Activated T-helper 1 cell treated with anti-CD3 and anti-CD28 coated beads, Interleukin-12 subunit alpha, Interleukin-12 subunit beta, Interleukin-2, Interleukin-4 antibody, amounts not matched to agents 30 ng/mL and 10 ng/mL and 1 ng/mL, durations not matched to agents 14 hours and 24 hours and 36 hours (primary cell): ENCODE measurements at regions of chr4 and their contacts with region 1.

Region 1: DNA sequence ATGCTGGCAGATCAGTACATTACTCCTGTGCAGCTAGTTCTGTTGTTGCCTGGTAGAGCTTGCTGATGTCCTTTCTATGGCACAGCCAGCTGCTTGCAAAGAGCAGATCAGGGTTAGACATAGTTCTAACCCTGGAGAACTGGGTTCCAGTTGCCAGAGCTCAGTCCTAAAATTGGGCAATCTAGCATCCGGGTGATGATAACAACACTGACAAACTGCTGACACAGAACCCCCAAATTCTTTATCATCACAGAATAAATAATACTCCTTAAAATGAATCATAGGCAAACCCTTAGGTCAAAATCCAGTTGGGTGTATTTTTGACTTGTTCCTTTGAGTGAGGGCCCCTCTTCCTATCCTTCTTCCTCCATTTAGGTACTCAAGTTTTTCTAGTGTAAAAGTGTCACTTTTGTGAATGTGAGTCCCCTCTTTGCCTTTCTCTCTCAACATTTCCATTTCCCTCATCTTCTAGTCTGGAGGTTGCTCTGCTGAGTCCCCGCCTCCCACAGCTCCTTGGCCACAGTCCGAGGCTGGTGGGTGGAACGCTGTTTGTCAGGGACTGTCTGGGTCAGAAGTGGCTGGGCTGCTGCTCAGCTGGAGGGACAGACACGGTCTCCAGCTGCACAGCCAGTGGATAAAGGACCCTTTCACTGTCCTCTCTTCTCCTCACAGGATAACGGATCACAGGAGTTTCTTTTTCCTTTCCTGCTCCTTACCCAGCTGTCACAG is 93.6 kb upstream of the RASGEF1B start:
- DNase-seq: no peak
- H3K4me3 Mint-ChIP-seq: no peak overlapping the region
- H3K27ac Mint-ChIP-seq: peak overlapping the region; percentile 48
- H3K4me1 Mint-ChIP-seq: peaks cover 7% of the 10 kb centered on the region
- H3K27me3 Mint-ChIP-seq: peaks cover 2% of the 10 kb centered on the region

Region 2: DNA sequence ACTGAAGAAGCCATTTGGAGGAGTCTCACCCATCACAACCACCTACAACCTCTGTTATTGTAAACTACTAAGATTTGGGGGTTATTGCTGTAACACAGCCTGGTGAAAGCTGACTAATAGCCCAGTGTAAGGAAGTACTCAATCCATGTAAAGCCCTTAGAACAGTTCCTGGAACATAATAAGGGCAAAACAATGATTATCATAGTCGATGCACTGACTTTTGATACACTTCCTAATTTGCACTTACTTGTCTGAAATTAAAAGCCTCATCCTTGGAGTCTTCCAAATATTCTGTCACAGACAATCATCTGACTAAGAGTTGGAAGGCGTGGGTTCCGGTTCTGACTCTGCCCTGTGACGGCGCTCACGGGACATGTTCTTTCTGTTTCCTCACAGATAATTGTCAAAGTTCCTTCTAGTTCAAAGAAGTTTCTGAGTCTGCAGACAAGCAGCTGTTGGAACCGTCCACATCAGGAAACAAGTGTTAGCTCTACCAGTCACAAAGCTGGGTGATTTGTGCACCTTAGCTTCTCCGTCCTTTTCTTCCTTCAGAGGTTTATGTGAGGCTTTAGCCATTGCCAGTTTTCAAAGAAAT is 60.2 kb before region 1 on chr4:
- intact Hi-C with region 1: loop called (anchors 2 kb)
- DNase-seq: peak; percentile 48
- H3K4me3 Mint-ChIP-seq: peak overlapping the region; percentile 30
- H3K27ac Mint-ChIP-seq: peak overlapping the region; percentile 45
- H3K4me1 Mint-ChIP-seq: peaks cover 36% of the 10 kb centered on the region
- H3K27me3 Mint-ChIP-seq: peaks cover 11% of the 10 kb centered on the region

Region 3: GRCh38 chr4:81684352-81684751 is 119.0 kb after region 1 on chr4:
- intact Hi-C with region 1: no loop called
- DNase-seq: no peak
- H3K4me3 Mint-ChIP-seq: no peak overlapping the region
- H3K27ac Mint-ChIP-seq: no peak overlapping the region
- H3K4me1 Mint-ChIP-seq: no peaks in the 10 kb centered on the region
- H3K27me3 Mint-ChIP-seq: peaks cover 5% of the 10 kb centered on the region